CD8-positive, alpha-beta T cell (primary cell): ENCODE measurements at regions of chr11 and their contacts with region 1.

Region 1: DNA sequence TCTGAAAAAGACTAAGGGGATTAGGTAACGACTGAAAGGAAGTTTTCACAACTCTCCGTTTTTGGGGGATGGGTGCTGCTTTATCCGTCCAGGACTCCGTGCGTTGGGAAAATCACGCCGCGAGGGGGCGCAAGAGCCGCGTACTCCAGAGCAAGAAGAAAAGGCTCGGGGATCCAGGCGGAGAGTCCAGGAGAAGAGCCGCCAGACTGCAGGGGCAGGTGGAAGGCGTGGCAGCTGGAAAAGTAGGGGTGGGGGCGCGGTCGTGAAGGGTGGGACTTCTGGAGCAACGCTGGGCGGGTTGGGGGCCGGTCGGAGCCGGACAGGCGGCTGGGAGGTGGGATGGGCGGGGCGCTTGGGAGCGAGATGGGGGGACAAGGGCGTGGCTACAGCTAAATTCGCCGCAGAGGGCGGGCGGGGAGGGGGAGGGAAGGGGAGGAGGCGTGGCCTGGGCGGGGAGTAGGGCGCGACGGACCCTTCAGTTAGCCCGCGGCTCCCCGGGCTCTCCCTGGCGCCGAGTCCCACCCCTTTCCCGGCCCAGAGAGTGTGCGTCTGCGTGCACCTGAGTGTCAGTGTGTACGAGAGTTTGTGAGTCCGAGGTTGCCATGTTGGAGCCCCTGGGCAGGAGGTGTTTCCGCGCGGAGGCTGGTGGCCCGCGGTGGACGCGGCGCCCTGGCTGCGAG is 613 bp upstream of the ARHGEF17 start:
- DNase-seq: peak; percentile 77 to 94 (median 89)
- ATAC-seq: peak; percentile 71
- H3K4me3 ChIP-seq: peak overlapping the region; percentile 62 to 77
- H3K4me3 Mint-ChIP-seq: peak overlapping the region; percentile 86
- H3K27ac ChIP-seq: no peak overlapping the region
- H3K27ac Mint-ChIP-seq: no peak overlapping the region
- H3K4me1 ChIP-seq: peaks cover 9% of the 10 kb centered on the region
- H3K4me1 Mint-ChIP-seq: peaks cover 10% of the 10 kb centered on the region
- H3K27me3 ChIP-seq: peaks cover 11 to 12% of the 10 kb centered on the region in 2 experiments
- H3K27me3 Mint-ChIP-seq: peaks cover 15% of the 10 kb centered on the region
- CTCF ChIP-seq: peak; percentile 46

Region 2: GRCh38 chr11:73295231-73295995 is 12.1 kb before region 1 on chr11:
- CTCF ChIA-PET with region 1: interaction called, 25 read pairs
- POLR2A ChIA-PET with region 1: no interaction called
- intact Hi-C with region 1: loop called in 1 of 2 experiments (anchors 1 kb)
- DNase-seq: peak; percentile 46 to 81 (median 71)
- ATAC-seq: peak; percentile 93
- H3K4me3 ChIP-seq: no peak overlapping the region
- H3K4me3 Mint-ChIP-seq: no peak overlapping the region
- H3K27ac ChIP-seq: no peak overlapping the region
- H3K27ac Mint-ChIP-seq: no peak overlapping the region
- H3K4me1 ChIP-seq: no peaks in the 10 kb centered on the region
- H3K4me1 Mint-ChIP-seq: peaks cover 2% of the 10 kb centered on the region
- H3K27me3 ChIP-seq: no peaks in the 10 kb centered on the region
- H3K27me3 Mint-ChIP-seq: peaks cover 14% of the 10 kb centered on the region
- CTCF ChIP-seq: peak; percentile 79